Activated B cell treated with CpG ODN at 0.5 μM for 24 hours (primary cell): ENCODE measurements at regions of chr10 and their contacts with region 1.

Region 1: GRCh38 chr10:15106352-15107013 is 9.3 kb downstream of the RPP38 start:
- DNase-seq: peak; percentile 32
- ATAC-seq: peak; percentile 96
- H3K4me3 Mint-ChIP-seq: no peak overlapping the region
- H3K27ac Mint-ChIP-seq: no peak overlapping the region
- H3K4me1 Mint-ChIP-seq: peaks cover 8% of the 10 kb centered on the region
- H3K27me3 Mint-ChIP-seq: no peaks in the 10 kb centered on the region
- CTCF ChIP-seq: peak; percentile 51

Region 2: GRCh38 chr10:14200698-14201544 is 905.6 kb before region 1 on chr10:
- CTCF ChIA-PET with region 1: interaction called, 4 read pairs
- POLR2A ChIA-PET with region 1: no interaction called
- intact Hi-C with region 1: loop called (anchors 1 kb)
- DNase-seq: no peak
- ATAC-seq: no peak
- H3K4me3 Mint-ChIP-seq: no peak overlapping the region
- H3K27ac Mint-ChIP-seq: no peak overlapping the region
- H3K4me1 Mint-ChIP-seq: no peaks in the 10 kb centered on the region
- H3K27me3 Mint-ChIP-seq: peaks cover 22% of the 10 kb centered on the region
- CTCF ChIP-seq: no peak

Region 3: GRCh38 chr10:14500172-14500765 is 606.2 kb before region 1 on chr10:
- CTCF ChIA-PET with region 1: interaction called, 3 read pairs
- POLR2A ChIA-PET with region 1: no interaction called
- intact Hi-C with region 1: loop called (anchors 1 kb)
- DNase-seq: no peak
- ATAC-seq: no peak
- H3K4me3 Mint-ChIP-seq: no peak overlapping the region
- H3K27ac Mint-ChIP-seq: no peak overlapping the region
- H3K4me1 Mint-ChIP-seq: peaks cover 18% of the 10 kb centered on the region
- H3K27me3 Mint-ChIP-seq: no peaks in the 10 kb centered on the region
- CTCF ChIP-seq: no peak

Region 4: DNA sequence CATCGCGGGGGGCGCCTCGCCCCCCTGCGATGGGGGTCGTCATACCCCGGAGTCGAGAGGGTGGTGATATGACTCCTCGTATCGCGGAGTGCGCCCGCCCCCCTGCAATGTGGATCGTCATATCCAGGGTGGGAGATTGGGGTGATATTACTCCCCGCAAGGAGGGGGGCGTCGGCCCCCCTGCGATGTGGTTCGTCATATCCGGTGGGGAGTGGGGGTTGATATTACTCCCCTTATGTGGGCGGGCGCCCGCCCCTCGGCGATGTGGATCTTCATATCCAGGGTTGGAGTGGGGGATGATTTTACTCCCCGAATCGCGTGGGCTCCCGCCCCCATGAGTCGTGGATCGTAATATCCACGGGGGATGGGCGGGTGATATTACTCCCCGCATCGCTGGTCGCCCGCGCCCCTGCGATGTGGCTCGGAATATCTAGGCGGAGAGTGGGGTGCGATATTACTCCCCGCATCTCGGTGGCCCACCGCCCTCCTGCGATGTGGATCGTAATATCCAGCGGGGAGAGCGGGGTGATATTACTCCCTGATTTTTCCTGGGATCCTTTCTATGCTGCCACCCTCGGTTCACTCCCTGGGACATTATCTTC is 110.4 kb before region 1 on chr10:
- CTCF ChIA-PET with region 1: no interaction called
- POLR2A ChIA-PET with region 1: no interaction called
- intact Hi-C with region 1: loop called (anchors 1 kb)
- DNase-seq: no peak
- ATAC-seq: no peak
- H3K4me3 Mint-ChIP-seq: no peak overlapping the region
- H3K27ac Mint-ChIP-seq: no peak overlapping the region
- H3K4me1 Mint-ChIP-seq: peaks cover 2% of the 10 kb centered on the region
- H3K27me3 Mint-ChIP-seq: peaks cover 3% of the 10 kb centered on the region
- CTCF ChIP-seq: no peak

Region 5: DNA sequence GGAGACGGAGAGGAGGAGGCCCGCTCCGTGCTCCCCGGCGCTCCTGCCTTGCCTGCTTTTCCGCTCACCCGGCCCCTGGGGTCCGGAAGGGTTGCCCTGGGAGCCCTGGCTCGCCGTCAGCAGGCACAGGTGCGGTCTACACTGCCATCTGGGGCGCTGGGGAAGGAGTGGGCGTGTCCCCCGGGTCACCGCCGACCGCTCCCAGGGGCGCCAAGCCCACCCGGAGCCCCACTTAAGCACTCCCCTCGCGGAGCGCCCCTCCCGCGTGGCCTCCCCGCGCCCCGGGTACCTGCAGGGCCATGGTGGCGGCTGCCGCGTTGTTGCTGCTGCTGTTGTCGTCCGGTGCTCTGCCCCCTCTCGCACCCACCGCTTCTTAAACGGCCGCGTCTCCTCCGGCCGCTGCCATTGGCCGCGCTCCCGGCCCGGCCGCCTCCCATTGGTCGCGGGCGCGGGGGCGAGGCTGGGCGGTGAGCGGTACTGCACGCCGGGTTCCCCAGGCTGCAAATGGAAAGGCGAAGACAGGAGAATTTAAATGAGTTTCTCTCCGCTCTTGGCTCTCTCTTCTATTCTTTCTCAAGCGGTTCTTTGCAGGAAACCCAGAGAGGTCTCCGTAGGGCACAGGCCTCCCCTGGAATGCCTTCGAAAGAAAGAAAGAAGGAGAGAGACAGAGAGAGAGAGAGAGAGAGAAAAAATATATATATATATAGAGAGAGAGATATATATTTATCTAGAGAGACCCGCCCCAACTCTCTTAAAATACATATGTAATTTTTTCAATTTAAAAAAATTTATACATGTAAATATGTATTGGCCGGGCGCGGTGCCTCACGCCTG is 17.8 kb before region 1 on chr10 and contains the start of gene ACBD7:
- CTCF ChIA-PET with region 1: no interaction called
- POLR2A ChIA-PET with region 1: no interaction called
- intact Hi-C with region 1: loop called (anchors 1 kb)
- DNase-seq: peak; percentile 79
- ATAC-seq: peak; percentile 100
- H3K4me3 Mint-ChIP-seq: peak within 1 kb of the TSS; percentile 77
- H3K27ac Mint-ChIP-seq: no peak within 1 kb of the TSS
- H3K4me1 Mint-ChIP-seq: no peaks in the 10 kb centered on the region
- H3K27me3 Mint-ChIP-seq: peaks cover 1% of the 10 kb centered on the region
- CTCF ChIP-seq: peak; percentile 22
- total RNA-seq, gene ACBD7: not detected in 2 replicates

Region 6: DNA sequence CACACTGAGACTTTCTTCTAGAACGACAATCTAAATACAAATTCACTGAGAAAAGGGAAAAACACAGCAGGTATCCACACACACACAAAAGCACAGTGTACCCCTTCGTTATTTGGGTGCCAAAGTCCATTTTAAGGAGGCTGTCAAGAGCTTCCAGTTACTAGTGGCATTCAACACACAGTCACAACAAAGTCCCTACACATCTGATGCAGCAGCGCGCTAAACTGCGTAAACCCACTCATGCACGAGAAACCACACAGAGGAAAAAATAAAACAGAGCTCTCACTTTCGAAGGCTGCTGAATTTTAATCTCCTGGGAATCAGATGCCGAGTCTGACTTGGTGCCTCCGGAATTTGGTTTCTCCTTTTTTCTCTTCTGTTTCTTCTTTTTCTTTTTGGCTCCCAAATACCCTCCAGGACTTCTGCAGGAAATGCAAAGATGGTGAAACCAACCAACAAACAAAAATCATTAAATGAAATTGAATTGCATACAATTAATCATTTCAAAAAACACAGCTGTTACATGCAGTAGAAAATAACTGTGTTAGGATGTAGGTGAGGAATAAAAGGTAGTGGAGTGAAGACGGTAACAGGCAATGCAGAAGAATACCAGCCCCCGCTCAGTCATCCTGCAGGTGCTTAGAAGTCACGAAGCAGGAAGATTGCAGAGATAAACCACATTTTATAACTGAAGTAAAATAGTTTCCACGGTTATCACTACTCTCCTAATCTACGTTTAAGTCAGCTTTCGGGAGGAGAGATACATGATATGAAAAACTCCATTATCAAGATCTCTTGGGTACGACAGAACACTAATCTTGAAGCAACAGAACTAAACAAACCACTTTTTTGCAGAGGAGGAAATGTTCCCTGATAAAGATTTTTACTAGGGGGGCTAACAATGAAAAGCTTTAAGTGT is 34.9 kb after region 1 on chr10:
- CTCF ChIA-PET with region 1: interaction called, 6 read pairs
- POLR2A ChIA-PET with region 1: interaction called, 5 read pairs
- intact Hi-C with region 1: loop called (anchors 2 kb)
- DNase-seq: peak; percentile 32
- ATAC-seq: peak; percentile 94
- H3K4me3 Mint-ChIP-seq: peak overlapping the region; percentile 74
- H3K27ac Mint-ChIP-seq: peak overlapping the region; percentile 69
- H3K4me1 Mint-ChIP-seq: peaks cover 40% of the 10 kb centered on the region
- H3K27me3 Mint-ChIP-seq: no peaks in the 10 kb centered on the region
- CTCF ChIP-seq: no peak

Region 7: GRCh38 chr10:15262036-15262713 is 155.7 kb after region 1 on chr10:
- CTCF ChIA-PET with region 1: no interaction called
- POLR2A ChIA-PET with region 1: no interaction called
- intact Hi-C with region 1: no loop called
- DNase-seq: no peak
- ATAC-seq: no peak
- H3K4me3 Mint-ChIP-seq: no peak overlapping the region
- H3K27ac Mint-ChIP-seq: no peak overlapping the region
- H3K4me1 Mint-ChIP-seq: no peaks in the 10 kb centered on the region
- H3K27me3 Mint-ChIP-seq: no peaks in the 10 kb centered on the region
- CTCF ChIP-seq: no peak